ENCODE measurements at regions of chr13 and their contacts with region 1.

Region 1: GRCh38 chr13:78401873-78402680 is 201.3 kb downstream of the POU4F1 start:
- DNase-seq: no peak
- ATAC-seq: no peak
- H3K4me3 ChIP-seq: no peak overlapping the region
- H3K27ac ChIP-seq: no peak overlapping the region
- H3K4me1 ChIP-seq: no peaks in the 10 kb centered on the region
- H3K27me3 ChIP-seq: no peaks in the 10 kb centered on the region
- CTCF ChIP-seq: no peak

Region 2: DNA sequence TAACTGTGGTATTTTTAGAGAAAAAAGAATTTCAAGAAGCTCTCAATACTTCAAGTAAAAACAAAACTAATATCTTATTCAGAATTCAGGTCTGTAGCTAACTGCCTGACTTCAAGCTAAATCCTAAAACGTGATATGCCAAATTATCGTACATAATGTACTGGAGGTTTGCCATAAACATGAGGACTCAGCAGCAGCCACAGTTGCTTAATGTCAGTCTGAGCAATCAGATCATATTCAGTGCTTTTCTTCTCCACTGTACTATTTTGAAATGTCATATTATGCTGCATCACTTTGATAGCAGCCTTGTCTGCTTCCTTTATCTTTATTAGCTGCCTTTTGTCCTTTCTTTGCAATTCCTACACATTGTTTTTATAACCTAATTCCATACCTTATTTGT is 218.3 kb before region 1 on chr13:
- intact Hi-C with region 1: no loop called
- DNase-seq: no peak
- ATAC-seq: no peak
- H3K4me3 ChIP-seq: no peak overlapping the region
- H3K27ac ChIP-seq: no peak overlapping the region
- H3K4me1 ChIP-seq: no peaks in the 10 kb centered on the region
- H3K27me3 ChIP-seq: no peaks in the 10 kb centered on the region
- CTCF ChIP-seq: no peak

Region 3: GRCh38 chr13:78759704-78760103 is 357.6 kb after region 1 on chr13:
- intact Hi-C with region 1: loop called in 1 of 10 experiments (anchors 5 kb)
- DNase-seq: no peak
- ATAC-seq: no peak
- H3K4me3 ChIP-seq: no peak overlapping the region
- H3K27ac ChIP-seq: no peak overlapping the region
- H3K4me1 ChIP-seq: no peaks in the 10 kb centered on the region
- H3K27me3 ChIP-seq: peaks cover 0 to 17% (median 6%) of the 10 kb centered on the region in 7 donors
- CTCF ChIP-seq: no peak

Measured in heart right ventricle (tissue), 16 donors.